ENCODE measurements at regions of chr5 and their contacts with region 1.

Region 1: DNA sequence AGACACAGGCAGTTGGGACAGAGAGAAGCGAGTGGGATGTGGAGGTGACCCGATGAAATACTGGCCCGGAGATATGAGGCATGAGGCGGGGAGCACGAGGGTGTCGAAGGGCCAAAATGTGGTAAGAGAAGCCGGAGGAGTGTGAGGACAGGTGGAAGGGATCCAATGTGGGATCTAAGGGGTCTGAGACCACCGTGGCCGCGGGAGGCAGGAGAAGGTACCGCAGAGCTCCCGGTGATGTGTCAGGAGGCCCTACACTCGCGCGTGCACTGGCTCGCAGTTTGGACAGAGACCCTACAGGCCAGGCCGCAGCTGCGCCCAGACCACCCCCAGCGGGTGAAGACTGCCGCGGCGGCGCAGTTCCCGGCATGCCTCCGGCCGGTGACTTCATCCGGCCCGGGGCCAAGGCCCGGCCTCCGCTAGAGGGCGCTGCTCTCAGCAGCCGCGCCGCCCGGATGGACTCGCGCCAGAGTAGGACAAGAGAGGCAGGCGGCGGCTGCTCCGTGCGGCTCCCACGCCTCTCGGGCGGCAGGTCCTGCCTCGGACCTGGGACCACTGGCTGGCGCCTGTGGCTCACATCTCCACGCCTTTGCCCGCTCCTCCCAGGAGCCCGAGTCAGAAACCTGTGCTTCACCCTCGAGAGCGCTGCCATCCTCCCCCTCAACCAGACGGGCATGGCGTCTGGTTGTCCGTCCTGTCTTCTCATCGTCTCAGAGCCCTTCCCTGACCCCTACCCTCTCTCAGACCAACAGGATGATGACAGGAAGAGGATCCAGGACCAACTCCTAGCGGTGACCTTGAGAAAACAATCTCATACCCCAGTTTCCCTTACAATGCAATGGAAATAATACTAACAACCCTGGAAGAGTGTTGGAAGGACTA is 35.4 kb upstream of the STING1 start:
- DNase-seq: no peak
- ATAC-seq: peak; percentile 92
- H3K4me3 ChIP-seq: peak overlapping the region; percentile 66
- H3K27ac ChIP-seq: peak overlapping the region; percentile 69
- H3K4me1 ChIP-seq: peaks cover 19% of the 10 kb centered on the region
- H3K27me3 ChIP-seq: no peaks in the 10 kb centered on the region
- CTCF ChIP-seq: peak; percentile 96 to 99 (median 97); a peak in 5 of 6 replicates
- EP300 ChIP-seq: no peak
- POLR2A ChIP-seq: peak; percentile 96
- RAD21 ChIP-seq: peak; percentile 74

Region 2: DNA sequence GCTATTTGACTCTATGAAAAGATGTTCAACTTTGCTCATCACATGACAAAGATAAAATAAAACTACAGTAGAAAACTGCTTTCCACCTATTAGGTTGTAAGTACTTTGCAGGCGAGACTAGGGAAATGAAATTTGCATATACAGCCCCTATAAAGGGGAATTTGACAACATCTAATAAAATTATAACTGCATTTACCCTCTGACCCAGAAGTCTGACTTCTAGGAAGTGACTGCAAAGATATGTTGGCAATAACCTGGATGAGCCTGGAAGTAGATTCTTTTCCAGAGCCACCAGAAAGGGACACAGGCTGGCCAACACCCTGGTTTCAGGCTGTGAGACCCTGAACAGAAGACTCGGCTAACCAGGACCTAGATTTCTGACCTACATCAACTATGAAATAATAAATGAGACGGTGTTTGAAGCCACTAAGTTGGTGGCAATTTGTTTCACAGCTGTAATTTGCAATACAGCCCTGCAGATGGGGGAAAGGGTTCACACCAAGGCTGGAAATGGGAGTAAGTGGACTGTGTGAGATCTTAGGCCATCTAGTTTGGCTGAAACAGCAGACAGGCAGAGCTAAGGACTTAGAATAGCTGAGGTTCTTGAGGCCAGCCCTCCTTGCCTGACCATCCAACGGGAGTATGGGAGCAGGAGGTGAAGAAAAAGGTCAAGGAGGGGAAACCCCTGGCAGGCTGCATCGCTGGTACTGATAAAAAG is 426.3 kb before region 1 on chr5:
- CTCF ChIA-PET with region 1: no interaction called
- POLR2A ChIA-PET with region 1: no interaction called
- RAD21 ChIA-PET with region 1: no interaction called
- SMC1A ChIA-PET with region 1: no interaction called
- in situ Hi-C with region 1: no loop called
- intact Hi-C with region 1: no loop called
- DNase-seq: no peak
- ATAC-seq: peak; percentile 8; the same call in 1 of the 3 replicates
- H3K4me3 ChIP-seq: no peak overlapping the region
- H3K27ac ChIP-seq: no peak overlapping the region
- H3K4me1 ChIP-seq: peaks cover 36% of the 10 kb centered on the region
- H3K27me3 ChIP-seq: no peaks in the 10 kb centered on the region
- CTCF ChIP-seq: peak; percentile 16 to 51 (median 42); a peak in 4 of 6 replicates
- EP300 ChIP-seq: no peak
- POLR2A ChIP-seq: no peak
- RAD21 ChIP-seq: peak; percentile 75

Region 3: GRCh38 chr5:139417214-139417613 is 100.7 kb before region 1 on chr5:
- CTCF ChIA-PET with region 1: interaction called, 491 read pairs
- POLR2A ChIA-PET with region 1: interaction called, 11 read pairs
- RAD21 ChIA-PET with region 1: interaction called, 241 read pairs
- SMC1A ChIA-PET with region 1: interaction called, 235 read pairs
- in situ Hi-C with region 1: loop called (anchors 5 kb)
- intact Hi-C with region 1: loop called (anchors 1 kb)
- DNase-seq: no peak
- ATAC-seq: no peak
- H3K4me3 ChIP-seq: no peak overlapping the region
- H3K27ac ChIP-seq: no peak overlapping the region
- H3K4me1 ChIP-seq: peaks cover 21% of the 10 kb centered on the region
- H3K27me3 ChIP-seq: no peaks in the 10 kb centered on the region
- CTCF ChIP-seq: no peak
- EP300 ChIP-seq: no peak
- POLR2A ChIP-seq: no peak
- RAD21 ChIP-seq: no peak

Region 4: DNA sequence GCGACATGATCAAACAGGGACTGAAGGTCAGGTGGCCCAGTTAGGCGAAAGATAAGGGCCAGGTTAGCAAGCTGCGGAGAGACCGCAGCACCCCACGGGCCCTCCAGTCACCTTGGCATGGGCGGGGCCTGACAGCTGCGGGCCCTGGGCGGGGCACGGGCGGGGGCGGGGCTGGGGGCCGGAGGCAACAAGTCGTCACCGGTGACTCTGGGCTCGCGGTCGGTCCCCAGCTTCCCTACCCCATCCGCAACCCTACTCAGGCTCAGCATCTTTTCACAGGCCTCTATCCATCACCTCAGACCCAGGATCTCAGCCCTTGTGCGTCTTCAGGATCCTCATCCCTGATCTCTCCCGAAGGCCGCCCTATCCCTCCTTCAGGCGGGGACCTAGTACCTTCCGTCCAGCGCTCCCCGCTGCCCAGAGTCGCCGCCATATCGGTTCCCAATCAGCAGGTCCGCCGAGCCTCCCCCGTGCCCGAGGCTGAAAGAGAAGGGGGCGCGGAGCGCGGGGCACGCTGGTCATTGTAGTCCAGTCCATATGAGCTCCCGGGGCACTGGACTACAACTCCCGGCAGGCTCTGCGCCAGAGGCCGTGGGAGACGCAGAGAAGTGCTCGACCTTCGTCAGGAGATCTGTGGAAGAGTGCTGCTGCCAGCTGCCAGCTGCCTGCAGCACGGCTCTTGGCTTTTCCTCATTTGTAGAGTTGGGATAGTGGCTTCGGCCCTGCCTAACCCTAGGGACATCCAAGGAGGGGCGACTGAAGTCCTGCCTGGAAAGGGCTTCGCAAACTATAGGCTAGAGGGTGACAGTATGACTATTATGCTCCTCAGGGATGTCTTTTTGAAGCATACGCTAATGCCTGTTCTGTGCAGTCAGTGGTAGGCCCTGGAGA is 78.7 kb before region 1 on chr5 and contains the start of gene DNAJC18:
- CTCF ChIA-PET with region 1: interaction called, 52 read pairs
- POLR2A ChIA-PET with region 1: interaction called, 7 read pairs
- RAD21 ChIA-PET with region 1: interaction called, 59 read pairs
- SMC1A ChIA-PET with region 1: interaction called, 77 read pairs
- in situ Hi-C with region 1: no loop called
- intact Hi-C with region 1: no loop called
- DNase-seq: peak; percentile 53
- ATAC-seq: peak; percentile 81
- H3K4me3 ChIP-seq: peak within 1 kb of the TSS; percentile 84
- H3K27ac ChIP-seq: peak within 1 kb of the TSS; percentile 95
- H3K4me1 ChIP-seq: peaks cover 24% of the 10 kb centered on the region
- H3K27me3 ChIP-seq: no peaks in the 10 kb centered on the region
- CTCF ChIP-seq: no peak
- EP300 ChIP-seq: no peak
- POLR2A ChIP-seq: peak; percentile 74
- RAD21 ChIP-seq: 0 out of 2 replicates have a peak, but pooled peaks have one; percentile 3
- polyA plus RNA-seq, gene DNAJC18: 20.5 to 26.7 TPM

Region 5: GRCh38 chr5:139474890-139475791 is 42.8 kb before region 1 on chr5:
- CTCF ChIA-PET with region 1: interaction called, 32 read pairs
- POLR2A ChIA-PET with region 1: no interaction called
- RAD21 ChIA-PET with region 1: no interaction called
- SMC1A ChIA-PET with region 1: interaction called, 9 read pairs
- in situ Hi-C with region 1: no loop called
- intact Hi-C with region 1: no loop called
- DNase-seq: no peak
- ATAC-seq: peak; percentile 17
- H3K4me3 ChIP-seq: no peak overlapping the region
- H3K27ac ChIP-seq: no peak overlapping the region
- H3K4me1 ChIP-seq: peaks cover 12% of the 10 kb centered on the region
- H3K27me3 ChIP-seq: no peaks in the 10 kb centered on the region
- CTCF ChIP-seq: no peak
- EP300 ChIP-seq: no peak
- POLR2A ChIP-seq: no peak
- RAD21 ChIP-seq: no peak

Region 6: DNA sequence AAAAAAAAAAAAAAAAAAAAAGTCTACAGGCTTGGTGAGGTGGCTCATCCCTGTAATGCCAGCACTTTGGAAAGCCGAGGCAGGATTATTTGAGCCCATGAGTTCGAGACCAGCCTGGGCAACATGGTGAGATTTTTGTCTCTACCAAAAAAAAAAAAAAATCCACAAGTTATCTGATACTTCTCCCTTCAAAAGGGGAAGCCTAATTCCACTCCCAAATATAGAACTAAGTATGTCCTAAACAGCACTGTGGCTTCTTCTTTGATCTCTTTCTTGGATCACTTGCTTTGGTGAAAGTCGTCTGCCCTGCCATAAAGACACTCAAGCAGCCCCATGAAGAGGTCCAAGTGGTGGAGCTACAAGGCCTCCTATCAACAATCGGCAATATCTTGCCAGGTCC is 16.5 kb before region 1 on chr5:
- CTCF ChIA-PET with region 1: interaction called, 25 read pairs
- POLR2A ChIA-PET with region 1: no interaction called
- RAD21 ChIA-PET with region 1: interaction called, 5 read pairs
- SMC1A ChIA-PET with region 1: interaction called, 12 read pairs
- in situ Hi-C with region 1: no loop called
- intact Hi-C with region 1: no loop called
- DNase-seq: no peak
- ATAC-seq: no peak
- H3K4me3 ChIP-seq: no peak overlapping the region
- H3K27ac ChIP-seq: no peak overlapping the region
- H3K4me1 ChIP-seq: no peaks in the 10 kb centered on the region
- H3K27me3 ChIP-seq: no peaks in the 10 kb centered on the region
- CTCF ChIP-seq: no peak
- EP300 ChIP-seq: no peak
- POLR2A ChIP-seq: no peak
- RAD21 ChIP-seq: no peak

Region 7: DNA sequence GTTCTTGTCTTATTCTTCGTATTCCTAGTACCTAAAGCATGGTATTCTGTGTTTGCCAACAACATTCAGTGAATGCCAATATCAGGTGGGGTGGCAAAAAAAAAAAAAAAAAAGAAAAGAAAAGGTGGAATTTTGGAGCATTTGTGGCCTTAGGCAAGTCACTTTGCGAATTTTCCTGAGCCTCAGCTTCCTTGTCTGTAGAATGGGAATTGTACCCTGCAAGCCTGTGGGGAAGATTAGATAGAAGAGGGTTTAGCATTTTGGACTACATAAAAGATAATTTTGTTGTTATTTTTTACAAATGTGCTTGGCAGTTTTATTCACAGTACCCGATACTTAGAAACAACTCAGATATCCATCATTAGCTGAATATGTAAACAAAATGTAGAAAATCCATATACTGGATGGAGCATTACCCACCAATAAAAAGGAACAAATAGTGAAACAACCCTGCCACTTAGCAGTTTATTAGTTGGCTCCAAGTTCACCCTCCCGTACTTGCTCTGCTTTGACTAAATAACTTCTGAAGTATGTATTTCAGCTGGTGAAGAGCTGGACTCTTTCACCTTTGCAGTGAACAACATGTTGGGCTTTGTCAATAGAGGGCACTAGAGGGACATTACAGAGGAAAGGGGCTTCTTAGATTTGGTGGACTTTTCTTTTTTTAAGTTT is 56.9 kb after region 1 on chr5:
- CTCF ChIA-PET with region 1: interaction called, 13 read pairs
- POLR2A ChIA-PET with region 1: interaction called, 4 read pairs
- RAD21 ChIA-PET with region 1: interaction called, 16 read pairs
- SMC1A ChIA-PET with region 1: interaction called, 6 read pairs
- in situ Hi-C with region 1: no loop called
- intact Hi-C with region 1: no loop called
- DNase-seq: no peak
- ATAC-seq: peak; percentile 78
- H3K4me3 ChIP-seq: no peak overlapping the region
- H3K27ac ChIP-seq: no peak overlapping the region
- H3K4me1 ChIP-seq: peaks cover 40% of the 10 kb centered on the region
- H3K27me3 ChIP-seq: no peaks in the 10 kb centered on the region
- CTCF ChIP-seq: peak; percentile 65 to 78 (median 70)
- EP300 ChIP-seq: no peak
- POLR2A ChIP-seq: no peak
- RAD21 ChIP-seq: peak; percentile 75

Measured in GM12878 (cell line).